ENCODE measurements at regions of chr1 and their contacts with region 1.

Region 1: DNA sequence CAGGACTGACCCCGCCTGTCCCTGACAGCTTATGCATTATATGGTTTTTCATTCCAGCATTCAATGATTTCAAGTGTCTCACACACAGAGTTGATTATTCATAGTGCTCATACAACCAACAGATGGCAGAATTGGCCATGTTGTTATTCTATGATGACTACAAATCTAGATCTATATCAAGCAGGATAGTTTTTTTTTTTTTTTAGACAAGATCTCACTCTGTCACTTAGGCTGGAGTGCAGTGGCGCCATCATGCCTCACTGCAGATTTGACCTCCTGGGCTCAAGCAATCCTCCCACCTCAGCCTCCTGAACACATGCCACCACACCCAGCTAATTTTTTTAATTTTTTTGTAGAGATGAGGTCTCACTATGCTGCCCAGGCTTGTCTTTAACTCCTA is 40.1 kb upstream of the LRRC8D start:
- DNase-seq: peak; percentile 62
- ATAC-seq: peak; percentile 68
- H3K4me3 Mint-ChIP-seq: peak overlapping the region; percentile 36
- H3K27ac Mint-ChIP-seq: peak overlapping the region; percentile 93
- H3K4me1 Mint-ChIP-seq: peaks cover 48% of the 10 kb centered on the region
- H3K27me3 Mint-ChIP-seq: no peaks in the 10 kb centered on the region
- CTCF ChIP-seq: peak; percentile 56

Region 2: GRCh38 chr1:89596698-89597097 is 184.0 kb before region 1 on chr1:
- CTCF ChIA-PET with region 1: no interaction called
- POLR2A ChIA-PET with region 1: no interaction called
- intact Hi-C with region 1: no loop called
- DNase-seq: no peak
- ATAC-seq: no peak
- H3K4me3 Mint-ChIP-seq: no peak overlapping the region
- H3K27ac Mint-ChIP-seq: no peak overlapping the region
- H3K4me1 Mint-ChIP-seq: peaks cover 81% of the 10 kb centered on the region
- H3K27me3 Mint-ChIP-seq: no peaks in the 10 kb centered on the region
- CTCF ChIP-seq: no peak

Region 3: DNA sequence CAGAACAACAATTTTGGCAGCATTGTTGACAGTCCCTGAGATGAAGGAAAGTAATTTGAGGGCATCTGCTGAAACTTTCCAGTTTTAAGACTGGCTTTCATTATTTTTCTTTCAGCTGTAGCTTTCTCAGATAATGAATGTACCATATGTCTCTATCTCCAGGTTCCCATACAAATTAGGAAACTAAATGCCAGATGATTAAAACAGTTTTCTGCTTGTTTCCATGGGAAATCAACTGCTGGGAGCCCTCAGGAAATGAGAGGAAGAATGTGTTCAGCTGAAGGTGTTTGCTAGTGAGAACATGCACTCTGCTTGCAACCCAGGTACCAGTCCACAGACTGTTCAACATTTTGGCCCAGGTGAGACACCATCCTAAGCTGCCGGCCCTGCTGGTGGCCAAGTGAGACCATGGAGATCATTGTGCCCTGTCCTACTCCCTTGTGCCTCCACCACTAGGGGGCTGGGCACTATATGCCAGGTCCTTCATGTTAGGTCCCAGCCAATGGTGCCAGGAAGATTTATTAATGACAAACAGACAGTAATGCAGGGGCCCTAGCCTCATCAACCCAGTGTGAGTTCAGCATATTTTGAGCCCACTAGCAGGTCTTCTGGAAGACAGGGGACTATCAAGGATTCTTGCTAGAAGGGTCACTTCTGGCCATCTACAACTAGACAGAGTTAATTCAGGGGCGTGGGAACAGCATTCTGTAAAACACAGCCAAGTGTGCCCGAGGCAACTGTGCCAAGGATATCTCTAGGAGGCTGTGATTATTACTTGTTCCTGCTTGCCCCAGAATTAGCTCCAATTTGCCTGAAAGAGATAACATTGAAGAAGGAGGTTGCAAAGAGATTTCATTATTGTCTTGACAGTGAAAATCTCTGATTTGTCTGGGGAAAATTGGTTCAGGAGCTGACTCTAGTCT is 164.8 kb before region 1 on chr1:
- CTCF ChIA-PET with region 1: interaction called, 4 read pairs
- POLR2A ChIA-PET with region 1: interaction called, 24 read pairs
- intact Hi-C with region 1: no loop called
- DNase-seq: peak; percentile 48
- ATAC-seq: no peak
- H3K4me3 Mint-ChIP-seq: no peak overlapping the region
- H3K27ac Mint-ChIP-seq: no peak overlapping the region
- H3K4me1 Mint-ChIP-seq: peaks cover 70% of the 10 kb centered on the region
- H3K27me3 Mint-ChIP-seq: no peaks in the 10 kb centered on the region
- CTCF ChIP-seq: peak; percentile 54

Region 4: DNA sequence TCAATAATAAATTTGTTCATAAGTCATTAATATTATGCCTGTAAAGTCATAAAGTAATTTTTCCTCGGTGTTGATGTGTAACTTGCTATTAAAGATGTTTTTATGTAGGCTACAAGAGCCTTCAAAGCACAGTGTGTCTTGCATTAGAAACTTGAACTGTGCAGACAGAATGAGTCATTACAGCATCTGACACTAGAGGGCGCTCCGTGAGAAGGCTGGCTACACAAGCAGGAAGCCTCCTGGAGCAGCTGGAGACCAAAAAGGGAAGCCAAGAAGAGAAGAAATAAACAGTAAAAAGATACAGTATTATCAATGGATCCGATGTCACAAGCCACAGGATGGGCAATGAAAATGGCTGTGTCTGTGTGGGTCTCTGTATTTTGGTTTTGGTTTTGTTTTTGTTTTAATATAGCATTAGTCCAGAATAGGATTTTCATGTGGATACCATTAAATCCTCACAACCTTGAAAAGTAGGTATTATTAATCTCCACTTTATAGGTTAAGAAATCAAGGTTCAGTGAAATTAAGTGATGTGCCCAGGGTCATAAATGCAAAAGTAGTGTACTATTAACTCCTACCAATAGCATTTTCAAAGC is 24.0 kb after region 1 on chr1:
- CTCF ChIA-PET with region 1: interaction called, 13 read pairs
- POLR2A ChIA-PET with region 1: interaction called, 4 read pairs
- intact Hi-C with region 1: no loop called
- DNase-seq: peak; percentile 94
- ATAC-seq: peak; percentile 95
- H3K4me3 Mint-ChIP-seq: no peak overlapping the region
- H3K27ac Mint-ChIP-seq: no peak overlapping the region
- H3K4me1 Mint-ChIP-seq: peaks cover 5% of the 10 kb centered on the region
- H3K27me3 Mint-ChIP-seq: peaks cover 2% of the 10 kb centered on the region
- CTCF ChIP-seq: peak; percentile 98

Measured in activated CD8-positive, alpha-beta T cell treated with anti-CD3 and anti-CD28 coated beads for 36 hours (primary cell).